ENCODE measurements at regions of chr5 and their contacts with region 1.

Region 1: GRCh38 chr5:73853091-73853490 is 227.1 kb downstream of the ARHGEF28 start:
- DNase-seq: no peak
- ATAC-seq: no peak
- H3K4me3 ChIP-seq: no peak overlapping the region
- H3K27ac ChIP-seq: no peak overlapping the region
- H3K4me1 ChIP-seq: no peaks in the 10 kb centered on the region
- H3K27me3 ChIP-seq: no peaks in the 10 kb centered on the region
- CTCF ChIP-seq: no peak

Region 2: DNA sequence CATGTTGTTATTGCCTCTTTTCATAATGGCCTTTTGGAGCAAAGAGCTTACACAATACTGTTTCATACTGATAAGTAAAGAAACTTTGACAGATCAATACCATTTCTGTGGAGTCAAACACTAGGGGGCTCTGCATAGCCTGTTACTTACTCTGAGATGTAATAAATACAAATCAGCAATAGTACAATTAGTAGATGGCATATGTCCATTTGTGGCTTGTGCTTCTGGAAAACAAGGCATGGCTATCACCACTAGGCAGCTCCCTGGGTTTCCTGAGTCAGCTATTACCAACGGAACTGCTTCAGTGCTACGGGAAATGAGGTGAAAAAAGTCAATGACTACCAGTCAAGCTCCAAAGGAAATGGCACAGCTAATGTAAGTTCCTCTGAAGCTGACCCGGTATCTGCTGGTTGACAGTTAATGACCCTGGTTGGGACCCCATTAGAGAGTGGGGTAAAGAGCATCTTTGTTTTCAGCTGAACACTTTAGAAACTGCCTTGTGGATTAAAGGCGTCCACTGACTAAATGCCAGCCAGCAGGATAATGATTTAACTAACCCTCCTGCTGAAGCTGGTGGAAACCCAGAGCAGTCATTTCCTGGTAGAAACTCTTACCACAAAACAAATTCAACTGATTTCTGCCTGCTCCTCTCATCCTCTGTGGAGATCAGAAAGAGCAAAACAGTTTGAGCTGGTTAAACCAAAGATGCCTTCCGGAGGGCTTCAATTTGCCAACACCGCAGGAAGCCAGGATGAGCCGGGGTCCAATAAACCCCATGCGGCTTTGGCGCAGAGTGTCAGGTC is 1082.1 kb after region 1 on chr5:
- intact Hi-C with region 1: no loop called
- DNase-seq: no peak
- ATAC-seq: no peak
- H3K4me3 ChIP-seq: no peak overlapping the region
- H3K27ac ChIP-seq: no peak overlapping the region
- H3K4me1 ChIP-seq: no peaks in the 10 kb centered on the region
- H3K27me3 ChIP-seq: peaks cover 0 to 9% (median 0%) of the 10 kb centered on the region in 3 donors
- CTCF ChIP-seq: peak; percentile 7

Region 3: GRCh38 chr5:75320341-75320740 is 1467.2 kb after region 1 on chr5:
- intact Hi-C with region 1: loop called in 1 of 2 experiments (anchors 10 kb)
- DNase-seq: no peak
- ATAC-seq: no peak
- H3K4me3 ChIP-seq: no peak overlapping the region
- H3K27ac ChIP-seq: no peak overlapping the region
- H3K4me1 ChIP-seq: no peaks in the 10 kb centered on the region
- H3K27me3 ChIP-seq: no peaks in the 10 kb centered on the region
- CTCF ChIP-seq: no peak

Measured in psoas muscle (tissue), 8 donors.